ENCODE measurements at regions of chr13 and their contacts with region 1.

Region 1: DNA sequence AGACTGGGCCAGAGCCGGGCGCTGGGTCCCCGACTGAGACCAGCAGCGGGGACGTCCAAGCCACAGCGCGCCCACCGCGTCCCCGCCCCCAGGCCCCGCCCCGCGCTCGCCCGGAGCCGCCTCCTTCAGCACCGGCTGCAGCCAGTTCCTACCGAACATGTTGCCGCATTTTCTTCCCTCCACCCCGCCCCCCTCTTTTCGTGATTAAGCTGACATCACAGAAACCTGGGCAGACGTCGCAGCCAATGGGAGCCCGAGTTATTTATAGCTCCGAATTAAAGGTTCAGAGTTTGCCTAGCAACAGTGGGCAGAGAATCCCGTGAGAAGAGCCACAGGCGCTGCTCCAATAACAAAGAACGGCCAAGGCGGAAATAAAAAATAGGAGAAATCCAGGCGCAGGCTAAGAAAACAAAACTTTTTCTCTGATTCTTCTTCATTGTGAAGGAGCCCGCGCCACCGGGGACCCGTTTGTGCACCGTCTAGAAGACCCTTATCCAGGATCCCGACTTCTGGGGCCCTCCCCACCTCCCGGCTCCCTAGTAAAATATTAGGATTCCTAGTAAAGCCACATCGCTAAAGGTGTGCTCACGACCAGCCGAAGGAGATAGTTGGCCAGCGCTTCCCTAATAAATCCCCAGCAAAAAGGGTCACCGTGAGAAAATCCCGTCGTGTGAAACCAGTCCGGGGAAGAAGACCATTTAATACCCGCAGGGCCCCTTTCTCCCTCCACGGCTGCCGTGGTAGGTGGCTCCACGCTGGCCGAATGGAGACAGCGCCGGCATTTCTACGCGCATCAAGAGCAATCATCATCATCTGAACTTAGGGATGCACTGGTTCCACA is 61.7 kb downstream of the SERP2 start:
- DNase-seq: peak; percentile 92 to 97 (median 96)
- H3K4me3 ChIP-seq: peak overlapping the region; percentile 69 to 80 (median 77)
- H3K4me3 Mint-ChIP-seq: peak overlapping the region; percentile 86 to 89
- H3K27ac ChIP-seq: peak overlapping the region; percentile 38 to 72
- H3K27ac Mint-ChIP-seq: peak overlapping the region; percentile 44 to 87 (median 80)
- H3K4me1 ChIP-seq: peaks cover 29 to 38% of the 10 kb centered on the region in 2 donors
- H3K4me1 Mint-ChIP-seq: peaks cover 26% of the 10 kb centered on the region
- H3K27me3 ChIP-seq: peaks cover 8 to 23% of the 10 kb centered on the region in 2 donors
- H3K27me3 Mint-ChIP-seq: peaks cover 11 to 23% (median 13%) of the 10 kb centered on the region in 3 donors
- CTCF ChIP-seq: no peak

Region 2: GRCh38 chr13:44050450-44051063 is 384.8 kb before region 1 on chr13:
- intact Hi-C with region 1: loop called (anchors 5 kb)
- DNase-seq: peak in 2 of 3 donors; percentile 7 to 20
- H3K4me3 ChIP-seq: no peak overlapping the region
- H3K4me3 Mint-ChIP-seq: no peak overlapping the region
- H3K27ac ChIP-seq: no peak overlapping the region
- H3K27ac Mint-ChIP-seq: no peak overlapping the region
- H3K4me1 ChIP-seq: no peaks in the 10 kb centered on the region
- H3K4me1 Mint-ChIP-seq: peaks cover 9% of the 10 kb centered on the region
- H3K27me3 ChIP-seq: no peaks in the 10 kb centered on the region
- H3K27me3 Mint-ChIP-seq: peaks cover 0 to 4% (median 2%) of the 10 kb centered on the region in 3 donors
- CTCF ChIP-seq: peak; percentile 78

Region 3: DNA sequence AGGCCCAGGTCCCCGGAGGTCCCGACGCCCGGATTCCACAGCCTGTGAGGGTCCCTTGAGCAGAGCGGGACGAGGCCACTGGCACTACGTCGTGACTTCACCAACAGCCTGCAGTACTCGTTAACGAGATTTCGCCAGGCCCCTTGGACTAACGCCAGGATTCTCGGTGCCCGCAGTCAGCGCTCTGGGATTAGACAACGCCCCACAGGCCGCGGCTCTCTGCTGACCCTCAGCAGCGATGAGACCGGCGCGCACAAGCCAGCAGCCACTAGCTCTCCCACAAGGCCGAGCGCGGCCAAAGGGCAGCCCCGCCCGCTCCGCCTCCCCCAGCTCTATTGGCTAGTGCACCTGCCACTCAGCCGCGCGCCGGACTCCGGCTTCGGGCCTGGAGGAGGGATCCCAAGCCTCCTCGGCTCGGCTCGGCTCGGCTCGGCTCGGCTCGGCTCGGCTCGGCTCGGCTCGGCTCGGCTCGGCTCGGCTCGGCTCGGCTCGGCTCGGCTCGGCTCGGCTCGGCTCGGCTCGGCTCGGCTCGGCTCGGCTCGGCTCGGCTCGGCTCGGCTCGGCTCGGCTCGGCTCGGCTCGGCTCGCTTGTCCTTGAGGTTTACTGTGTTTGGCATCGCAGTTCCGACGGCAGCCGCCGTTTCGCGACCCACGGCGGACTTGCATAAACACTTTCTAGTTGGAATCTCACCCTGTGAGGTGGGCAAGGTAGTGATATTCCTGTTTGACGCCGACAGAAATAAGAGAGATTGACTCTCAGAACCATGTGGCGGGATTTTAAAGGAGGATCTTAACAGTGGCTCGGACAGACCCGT is 293.4 kb before region 1 on chr13:
- intact Hi-C with region 1: loop called (anchors 5 kb)
- DNase-seq: peak; percentile 95 to 97 (median 96)
- H3K4me3 ChIP-seq: peak overlapping the region; percentile 62 to 97 (median 75)
- H3K4me3 Mint-ChIP-seq: peak overlapping the region; percentile 86 to 97
- H3K27ac ChIP-seq: peak overlapping the region; percentile 90
- H3K27ac Mint-ChIP-seq: peak overlapping the region; percentile 88 to 98 (median 96)
- H3K4me1 ChIP-seq: peaks cover 13 to 16% of the 10 kb centered on the region in 2 donors
- H3K4me1 Mint-ChIP-seq: peaks cover 21% of the 10 kb centered on the region
- H3K27me3 ChIP-seq: no peaks in the 10 kb centered on the region
- H3K27me3 Mint-ChIP-seq: peaks cover 1 to 4% (median 2%) of the 10 kb centered on the region in 3 donors
- CTCF ChIP-seq: no peak

Region 4: GRCh38 chr13:44243198-44243857 is 192.0 kb before region 1 on chr13:
- intact Hi-C with region 1: loop called (anchors 5 kb)
- DNase-seq: peak; percentile 63 to 79 (median 72)
- H3K4me3 ChIP-seq: no peak overlapping the region
- H3K4me3 Mint-ChIP-seq: no peak overlapping the region
- H3K27ac ChIP-seq: no peak overlapping the region
- H3K27ac Mint-ChIP-seq: peak overlapping the region in 3 of 7 donors; percentile 27 to 70 (median 34)
- H3K4me1 ChIP-seq: no peaks in the 10 kb centered on the region
- H3K4me1 Mint-ChIP-seq: peaks cover 11% of the 10 kb centered on the region
- H3K27me3 ChIP-seq: no peaks in the 10 kb centered on the region
- H3K27me3 Mint-ChIP-seq: peaks cover 6 to 12% (median 9%) of the 10 kb centered on the region in 3 donors
- CTCF ChIP-seq: peak; percentile 62

Region 5: DNA sequence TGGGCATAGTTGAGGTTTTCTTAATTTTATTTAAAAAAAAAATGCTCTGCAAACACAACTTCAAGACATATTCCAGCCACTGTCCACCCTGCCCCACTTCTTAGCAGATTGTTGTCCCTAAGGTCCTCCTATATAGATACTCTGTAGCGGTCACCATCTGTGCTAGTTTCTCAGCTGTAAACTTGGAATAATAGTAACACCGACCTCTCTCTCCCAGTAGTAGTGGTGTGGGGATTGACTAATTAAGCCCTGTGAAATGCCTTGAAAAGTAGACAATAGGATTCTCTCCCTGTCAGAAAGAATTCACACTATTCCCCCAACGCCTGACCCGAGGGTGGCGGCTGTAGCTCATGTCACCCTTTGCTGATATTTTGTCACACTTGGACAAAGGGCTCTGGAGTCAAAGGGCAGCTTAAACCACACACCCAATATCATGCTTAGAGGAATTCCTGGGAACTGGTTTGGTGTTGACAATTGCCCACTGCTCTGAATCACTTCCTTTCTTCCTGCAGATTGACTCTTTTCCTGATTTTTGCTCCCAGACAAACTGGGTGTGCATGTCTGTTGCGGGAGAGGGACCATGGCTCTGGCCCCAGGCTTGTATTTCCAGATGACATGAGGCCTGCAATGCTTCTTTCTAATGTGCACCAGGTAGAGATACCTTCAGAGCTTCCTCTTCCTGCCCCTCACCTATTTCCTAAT is 70.9 kb before region 1 on chr13:
- intact Hi-C with region 1: no loop called
- DNase-seq: no peak
- H3K4me3 ChIP-seq: no peak overlapping the region
- H3K4me3 Mint-ChIP-seq: no peak overlapping the region
- H3K27ac ChIP-seq: no peak overlapping the region
- H3K27ac Mint-ChIP-seq: no peak overlapping the region
- H3K4me1 ChIP-seq: no peaks in the 10 kb centered on the region
- H3K4me1 Mint-ChIP-seq: peaks cover 4% of the 10 kb centered on the region
- H3K27me3 ChIP-seq: no peaks in the 10 kb centered on the region
- H3K27me3 Mint-ChIP-seq: peaks cover 2 to 6% (median 2%) of the 10 kb centered on the region in 3 donors
- CTCF ChIP-seq: no peak

Region 6: DNA sequence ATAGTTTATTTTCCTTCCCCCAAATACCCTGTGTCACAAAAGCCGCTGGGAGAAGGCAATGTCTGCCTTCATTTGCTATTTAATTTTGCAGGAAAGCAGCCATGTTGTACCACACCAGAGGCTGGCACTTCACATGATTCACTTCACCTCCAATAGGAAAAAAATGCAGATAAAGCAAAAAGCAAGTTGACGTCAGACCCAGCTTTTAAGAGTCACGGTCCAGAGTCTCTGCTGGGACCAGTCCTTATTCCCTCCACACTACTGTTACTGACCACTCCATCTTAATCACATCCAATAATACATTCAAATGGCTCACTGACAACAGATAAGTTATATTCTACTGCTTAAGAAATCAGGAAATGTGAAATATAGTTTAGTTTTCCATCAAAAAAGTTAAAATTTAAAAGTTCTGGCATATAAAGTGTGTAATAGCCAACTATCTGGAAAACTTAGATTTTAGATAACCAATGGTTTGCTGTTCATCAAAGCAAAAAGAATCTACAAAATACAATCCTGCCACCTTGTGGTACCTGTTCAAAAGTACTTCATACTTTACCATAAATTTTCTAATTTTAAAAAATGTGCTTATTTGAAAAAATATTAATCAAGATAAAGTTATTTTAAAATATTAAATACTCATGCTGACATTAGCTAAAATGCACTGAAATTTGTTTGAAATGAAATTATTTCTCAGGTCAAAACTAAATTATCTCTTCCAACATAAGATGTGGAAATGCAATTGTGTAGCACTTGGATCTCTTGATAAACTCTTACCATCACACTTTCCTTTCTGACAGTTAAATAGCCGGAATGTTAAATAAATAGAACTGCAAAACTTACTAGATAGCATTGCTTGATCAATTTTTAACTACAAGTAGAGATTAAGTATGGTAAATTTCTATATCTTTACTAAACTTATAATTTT is 35.5 kb after region 1 on chr13:
- intact Hi-C with region 1: no loop called
- DNase-seq: peak in 1 of 3 donors; percentile 24
- H3K4me3 ChIP-seq: no peak overlapping the region
- H3K4me3 Mint-ChIP-seq: no peak overlapping the region
- H3K27ac ChIP-seq: no peak overlapping the region
- H3K27ac Mint-ChIP-seq: no peak overlapping the region
- H3K4me1 ChIP-seq: no peaks in the 10 kb centered on the region
- H3K4me1 Mint-ChIP-seq: no peaks in the 10 kb centered on the region
- H3K27me3 ChIP-seq: no peaks in the 10 kb centered on the region
- H3K27me3 Mint-ChIP-seq: peaks cover 0 to 2% (median 0%) of the 10 kb centered on the region in 3 donors
- CTCF ChIP-seq: peak; percentile 63

Region 7: DNA sequence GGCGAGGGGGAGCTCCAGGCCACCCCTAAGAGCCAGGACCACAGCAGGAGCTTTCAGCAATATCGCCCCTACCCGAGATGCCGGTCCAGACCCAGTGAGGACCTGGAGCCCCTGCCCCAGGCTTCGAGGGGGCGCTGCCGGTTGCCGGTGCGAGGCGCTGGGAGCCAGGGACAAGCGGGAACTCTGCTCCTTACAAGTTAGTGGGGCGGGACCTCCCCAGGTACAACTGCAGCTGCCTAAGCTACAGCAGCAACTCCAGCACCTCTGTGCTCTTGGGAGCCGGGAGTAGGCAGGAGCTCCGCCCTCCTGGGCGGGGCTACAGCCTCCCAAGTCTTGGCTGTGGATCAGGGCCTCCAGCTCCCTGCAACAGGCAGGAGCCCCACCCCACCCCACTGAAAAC is 156.0 kb after region 1 on chr13:
- intact Hi-C with region 1: no loop called
- DNase-seq: no peak
- H3K4me3 ChIP-seq: no peak overlapping the region
- H3K4me3 Mint-ChIP-seq: no peak overlapping the region
- H3K27ac ChIP-seq: no peak overlapping the region
- H3K27ac Mint-ChIP-seq: no peak overlapping the region
- H3K4me1 ChIP-seq: no peaks in the 10 kb centered on the region
- H3K4me1 Mint-ChIP-seq: no peaks in the 10 kb centered on the region
- H3K27me3 ChIP-seq: no peaks in the 10 kb centered on the region
- H3K27me3 Mint-ChIP-seq: peaks cover 2% of the 10 kb centered on the region in 3 donors
- CTCF ChIP-seq: no peak